ENCODE measurements at regions of chr12 and their contacts with region 1.

Region 1: DNA sequence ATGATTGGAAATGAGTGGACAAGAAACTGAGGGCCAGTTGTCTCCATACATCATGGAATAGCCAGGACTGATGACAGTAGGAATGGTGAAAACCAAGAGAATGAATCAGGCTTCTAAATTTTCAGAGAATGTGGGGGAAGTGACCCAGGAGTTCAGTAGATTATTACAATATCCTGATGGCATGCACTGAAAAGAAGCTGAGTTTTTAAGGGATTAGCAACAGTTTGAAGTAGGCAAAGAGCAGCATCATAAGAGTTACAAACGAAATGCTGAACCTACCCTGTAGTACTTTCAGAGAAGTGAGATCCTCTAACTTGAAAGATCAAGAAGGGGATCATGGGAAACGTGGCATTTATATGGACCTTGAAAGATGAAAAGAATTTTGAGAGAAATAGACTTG is 13.2 kb downstream of the SLC2A14 start:
- DNase-seq: no peak

Region 2: GRCh38 chr12:7344833-7345606 is 514.5 kb before region 1 on chr12:
- intact Hi-C with region 1: no loop called
- DNase-seq: no peak

Region 3: GRCh38 chr12:7995266-7995963 is 135.9 kb after region 1 on chr12:
- intact Hi-C with region 1: loop called (anchors 1 kb)
- DNase-seq: peak; percentile 64 to 97 (median 80)

Measured in posterior cingulate gyrus (tissue), 11 donors.